ENCODE measurements at regions of chr1 and their contacts with region 1.

Region 1: DNA sequence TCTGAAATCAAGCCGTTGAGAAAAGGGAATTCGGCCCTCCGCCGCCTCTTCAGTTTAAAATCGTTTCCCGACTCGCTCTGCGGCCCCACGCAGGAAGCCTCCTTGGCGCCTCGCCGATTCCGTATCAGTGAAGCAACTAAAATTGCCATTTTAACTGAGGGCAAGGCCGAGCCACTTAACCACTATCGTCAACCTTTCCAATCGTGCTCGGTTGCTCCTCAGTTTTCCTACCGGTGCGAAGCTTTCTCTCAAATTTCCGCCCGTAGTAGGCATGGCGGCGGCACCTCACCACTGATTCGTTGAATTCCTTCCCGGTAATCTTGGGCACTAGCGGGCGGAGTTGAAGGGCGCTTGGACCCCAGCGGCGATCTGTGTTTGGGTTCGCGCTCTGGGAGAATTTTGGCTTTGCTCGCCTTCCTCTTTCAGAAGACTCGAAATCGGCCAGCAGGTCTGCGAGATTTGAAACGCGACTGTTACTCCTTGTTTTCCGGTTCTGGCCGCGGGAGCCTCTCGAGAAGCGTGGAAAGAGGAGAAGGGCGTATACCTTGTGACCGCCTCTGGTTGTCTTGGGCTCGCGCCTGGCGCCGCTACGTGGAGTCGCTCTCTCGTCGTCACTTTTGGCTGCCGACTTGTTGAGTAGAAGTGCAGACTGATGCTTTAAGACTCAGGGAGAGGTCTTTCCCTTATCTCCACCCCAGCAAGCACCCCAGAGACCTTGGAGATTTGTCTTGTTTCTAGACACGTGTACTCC is at the starts of genes CENPL and DARS2:
- DNase-seq: peak; percentile 76 to 98 (median 84)
- ATAC-seq: peak; percentile 90
- H3K4me3 ChIP-seq: peak within 1 kb of the TSS; percentile 56
- H3K27ac ChIP-seq: peak within 1 kb of the TSS; percentile 91
- H3K4me1 ChIP-seq: peaks cover 8 to 13% of the 10 kb centered on the region in 2 experiments; a peak in 4 of 5 replicates
- H3K27me3 ChIP-seq: no peaks in the 10 kb centered on the region
- CTCF ChIP-seq: no peak
- EP300 ChIP-seq: peak; percentile 7
- POLR2A ChIP-seq: peak; percentile 98
- RAD21 ChIP-seq: no peak
- polyA plus RNA-seq, gene CENPL: 37.0 to 39.7 TPM
- polyA plus RNA-seq, gene DARS2: 55.4 to 74.8 TPM

Region 2: GRCh38 chr1:173429471-173430402 is 394.8 kb before region 1 on chr1:
- CTCF ChIA-PET with region 1: interaction called, 13 read pairs
- POLR2A ChIA-PET with region 1: interaction called, 4 read pairs
- in situ Hi-C with region 1: loop called (anchors 10 kb)
- intact Hi-C with region 1: loop called (anchors 1 kb)
- DNase-seq: peak; percentile 78 to 96 (median 83)
- ATAC-seq: peak; percentile 94
- H3K4me3 ChIP-seq: peak overlapping the region; percentile 5; the same call in 1 of the 2 replicates
- H3K27ac ChIP-seq: peak overlapping the region; percentile 89
- H3K4me1 ChIP-seq: peaks cover 19 to 63% of the 10 kb centered on the region in 2 experiments; a peak in 4 of 5 replicates
- H3K27me3 ChIP-seq: no peaks in the 10 kb centered on the region
- CTCF ChIP-seq: peak; percentile 70 to 94 (median 82)
- EP300 ChIP-seq: peak; percentile 64; the same call in 1 of the 2 replicates
- POLR2A ChIP-seq: peak; percentile 58
- RAD21 ChIP-seq: peak; percentile 55 to 75

Region 3: GRCh38 chr1:173570370-173571007 is 254.0 kb before region 1 on chr1:
- CTCF ChIA-PET with region 1: no interaction called
- POLR2A ChIA-PET with region 1: no interaction called
- in situ Hi-C with region 1: no loop called
- intact Hi-C with region 1: loop called (anchors 10 kb)
- DNase-seq: no peak
- ATAC-seq: peak; percentile 43
- H3K4me3 ChIP-seq: no peak overlapping the region
- H3K27ac ChIP-seq: no peak overlapping the region
- H3K4me1 ChIP-seq: no peaks in the 10 kb centered on the region
- H3K27me3 ChIP-seq: no peaks in the 10 kb centered on the region
- CTCF ChIP-seq: no peak
- EP300 ChIP-seq: no peak
- POLR2A ChIP-seq: no peak
- RAD21 ChIP-seq: no peak

Region 4: DNA sequence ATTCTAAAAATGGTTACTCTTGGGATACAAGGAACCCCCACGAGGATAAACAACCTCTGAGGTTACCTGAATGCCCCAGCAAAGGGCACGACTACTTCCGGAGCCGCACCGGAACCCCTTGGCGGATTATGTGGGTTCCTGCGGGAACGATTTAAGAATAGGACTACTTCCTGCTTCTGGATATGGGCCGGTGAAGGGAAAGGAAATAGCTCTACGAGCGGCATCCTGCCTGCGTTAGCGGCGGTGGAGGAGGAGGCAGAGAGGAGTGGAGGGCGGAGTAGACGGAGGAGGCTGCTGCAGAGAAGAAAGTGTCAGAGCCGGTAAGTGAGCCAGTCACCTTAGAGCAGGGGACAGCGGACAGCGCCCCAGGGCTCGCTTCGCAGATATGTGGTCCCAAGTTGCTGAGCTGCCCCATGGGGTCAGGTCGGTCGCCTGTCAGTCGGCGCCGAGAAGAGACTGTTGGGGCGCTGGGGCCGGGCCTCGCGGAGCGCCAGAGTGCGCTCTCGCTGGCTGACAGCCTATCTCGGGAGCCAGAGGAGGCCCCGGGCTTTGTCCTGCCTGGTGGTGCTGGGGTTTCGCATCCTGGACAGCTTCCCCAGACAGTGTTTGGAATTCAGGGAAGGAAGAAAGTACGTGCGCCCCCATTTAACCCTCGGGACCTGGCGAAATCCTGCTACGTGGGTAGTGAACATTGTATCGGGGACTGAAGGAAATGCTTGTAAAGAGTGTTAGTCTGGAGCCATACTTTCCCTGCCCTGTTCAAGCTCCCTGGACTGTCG is 109.6 kb before region 1 on chr1 and contains the start of gene KLHL20:
- CTCF ChIA-PET with region 1: no interaction called
- POLR2A ChIA-PET with region 1: interaction called, 7 read pairs
- in situ Hi-C with region 1: no loop called
- intact Hi-C with region 1: loop called (anchors 5 kb)
- DNase-seq: peak; percentile 72 to 95 (median 82)
- ATAC-seq: peak; percentile 97
- H3K4me3 ChIP-seq: peak within 1 kb of the TSS; percentile 80
- H3K27ac ChIP-seq: peak within 1 kb of the TSS; percentile 82
- H3K4me1 ChIP-seq: no peaks in the 10 kb centered on the region; a peak in 2 of 5 replicates
- H3K27me3 ChIP-seq: no peaks in the 10 kb centered on the region
- CTCF ChIP-seq: peak in 2 of 3 experiments; percentile 14 to 29; a peak in 1 of 6 replicates
- EP300 ChIP-seq: peak; percentile 64
- POLR2A ChIP-seq: peak; percentile 98
- RAD21 ChIP-seq: peak; percentile 20 to 54; a peak in 3 of 4 replicates
- polyA plus RNA-seq, gene KLHL20: 8.9 to 10.3 TPM

Region 5: GRCh38 chr1:173867753-173868265 is 43.3 kb after region 1 on chr1 and contains the start of gene GAS5:
- CTCF ChIA-PET with region 1: no interaction called
- POLR2A ChIA-PET with region 1: interaction called, 20 read pairs
- in situ Hi-C with region 1: no loop called
- intact Hi-C with region 1: loop called (anchors 1 kb)
- DNase-seq: peak; percentile 91 to 100 (median 94)
- ATAC-seq: peak; percentile 85
- H3K4me3 ChIP-seq: peak within 1 kb of the TSS; percentile 86
- H3K27ac ChIP-seq: peak within 1 kb of the TSS; percentile 95
- H3K4me1 ChIP-seq: peaks cover 17 to 34% of the 10 kb centered on the region in 2 experiments
- H3K27me3 ChIP-seq: no peaks in the 10 kb centered on the region; a peak in 1 of 5 replicates
- CTCF ChIP-seq: no peak
- EP300 ChIP-seq: peak; percentile 16; the same call in 1 of the 2 replicates
- POLR2A ChIP-seq: peak; percentile 100
- RAD21 ChIP-seq: peak in 1 of 2 experiments; percentile 13; a peak in 1 of 4 replicates
- polyA plus RNA-seq, gene GAS5: 891 to 1,006 TPM